ENCODE measurements at regions of chr15 and their contacts with region 1.

Region 1: DNA sequence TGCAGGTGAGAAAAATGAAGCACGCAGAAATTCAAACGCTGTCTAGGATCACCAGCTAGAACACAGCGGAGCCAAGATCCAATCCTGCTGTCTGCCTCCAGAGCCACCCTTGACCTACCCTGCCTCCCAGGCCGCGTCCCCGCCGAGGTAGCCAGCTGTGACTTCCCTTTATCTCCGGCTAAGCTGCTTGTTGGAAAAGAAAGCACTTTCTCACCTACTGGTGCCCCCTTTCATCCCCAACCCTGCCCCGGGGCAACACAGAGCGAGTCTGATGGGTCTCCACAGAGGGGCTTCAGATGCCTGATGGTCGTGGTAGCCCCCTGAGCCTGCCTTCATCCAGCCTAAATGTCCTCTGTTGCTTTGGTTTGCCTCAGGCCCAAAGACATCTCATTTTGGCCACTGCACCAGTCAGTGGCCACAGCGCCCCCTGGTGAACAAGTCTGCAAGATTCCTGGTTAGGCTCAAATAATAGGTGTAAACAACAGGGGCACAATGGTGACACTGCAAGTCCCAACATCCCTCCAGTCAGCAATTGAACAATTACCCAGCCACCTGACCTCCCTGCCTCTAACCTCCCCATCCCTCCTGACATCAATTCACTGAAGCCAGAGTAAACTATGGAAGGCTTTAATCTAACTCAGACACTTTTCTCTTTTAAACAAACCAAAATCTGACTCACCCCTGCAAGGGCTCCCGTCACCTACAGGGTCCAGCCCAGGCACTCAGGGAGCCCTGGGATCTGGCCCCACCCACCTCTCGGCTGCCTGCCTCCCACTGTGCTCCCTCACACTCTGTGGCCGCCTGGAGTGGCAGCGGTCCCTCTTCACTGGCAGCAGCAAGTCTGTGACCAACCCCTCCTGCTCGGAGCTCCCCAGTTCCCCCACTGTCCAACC is 27.3 kb upstream of the BCL2L10 start:
- DNase-seq: peak; percentile 81
- H3K4me3 ChIP-seq: no peak overlapping the region
- H3K27ac ChIP-seq: no peak overlapping the region
- H3K4me1 ChIP-seq: peaks cover 6% of the 10 kb centered on the region
- H3K27me3 ChIP-seq: no peaks in the 10 kb centered on the region
- CTCF ChIP-seq: peak; percentile 80 to 85
- POLR2A ChIP-seq: no peak

Region 2: DNA sequence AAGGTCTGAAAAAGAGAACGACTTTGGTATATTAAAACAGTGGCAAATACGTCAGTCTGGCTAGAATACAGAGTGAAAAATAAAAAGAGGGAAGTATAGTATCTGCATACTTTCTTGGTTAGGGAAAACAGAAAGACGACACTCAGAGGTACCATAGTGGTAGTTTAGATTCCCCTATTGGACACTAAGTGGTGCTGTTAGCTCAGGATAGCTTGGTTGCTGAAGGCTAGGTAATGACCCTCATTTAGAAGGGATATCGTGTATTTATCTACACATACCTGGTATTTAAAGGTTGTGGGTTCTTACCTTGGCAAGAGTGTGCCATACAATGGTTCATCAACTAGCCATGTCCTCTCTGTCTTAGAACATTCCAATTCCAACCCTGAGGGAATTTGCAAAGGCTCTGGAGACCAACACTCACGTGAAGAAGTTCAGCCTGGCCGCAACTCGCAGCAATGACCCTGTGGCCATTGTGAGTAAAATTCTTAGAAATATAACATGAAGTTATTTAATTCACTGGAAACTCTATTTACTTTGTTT is 357.4 kb before region 1 on chr15:
- CTCF ChIA-PET with region 1: no interaction called
- POLR2A ChIA-PET with region 1: no interaction called
- dilution Hi-C with region 1: no loop called
- intact Hi-C with region 1: loop called (anchors 10 kb)
- DNase-seq: peak; percentile 25
- H3K4me3 ChIP-seq: no peak overlapping the region
- H3K27ac ChIP-seq: no peak overlapping the region
- H3K4me1 ChIP-seq: no peaks in the 10 kb centered on the region
- H3K27me3 ChIP-seq: peaks cover 0 to 3% of the 10 kb centered on the region in 2 experiments
- CTCF ChIP-seq: peak; percentile 39 to 45
- POLR2A ChIP-seq: no peak

Region 3: DNA sequence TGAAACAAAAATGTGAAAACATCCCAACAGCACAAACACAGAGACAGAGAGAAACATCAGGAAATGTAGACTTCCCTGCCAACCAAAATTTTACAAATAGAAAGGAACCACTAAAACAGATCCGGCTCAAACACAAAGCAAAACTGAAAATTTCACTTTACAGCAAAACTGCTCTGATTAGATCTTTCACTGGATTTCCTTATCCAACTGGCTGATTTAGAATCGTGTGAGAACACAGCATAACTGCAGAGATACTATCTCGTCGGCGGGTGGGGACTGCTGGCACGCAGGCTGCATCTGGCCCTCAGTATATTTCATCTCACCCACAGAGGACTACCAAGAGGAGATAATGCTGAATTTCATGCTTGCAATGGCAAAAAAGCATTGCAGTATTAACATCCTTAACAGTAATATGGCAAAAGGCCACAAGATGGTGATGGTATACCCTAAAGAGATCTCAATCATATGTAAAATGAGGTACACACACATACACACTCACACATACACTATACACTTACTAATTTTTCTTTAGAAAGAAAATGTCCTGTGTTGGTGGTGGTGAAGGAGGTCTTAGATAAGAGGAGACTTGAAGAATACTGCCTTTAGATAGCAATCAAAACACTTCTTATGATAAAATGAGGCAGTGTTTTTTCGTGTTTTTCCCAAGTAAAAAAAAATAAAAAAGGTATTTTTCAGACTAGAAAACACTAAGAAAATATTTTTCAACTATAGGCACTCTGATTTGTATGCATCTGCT is 157.7 kb before region 1 on chr15:
- CTCF ChIA-PET with region 1: interaction called, 9 read pairs
- POLR2A ChIA-PET with region 1: no interaction called
- dilution Hi-C with region 1: no loop called
- intact Hi-C with region 1: loop called (anchors 1 kb)
- DNase-seq: peak; percentile 94
- H3K4me3 ChIP-seq: peak overlapping the region; percentile 5 to 77 (median 10)
- H3K27ac ChIP-seq: peak overlapping the region; percentile 96
- H3K4me1 ChIP-seq: peaks cover 20% of the 10 kb centered on the region
- H3K27me3 ChIP-seq: no peaks in the 10 kb centered on the region
- CTCF ChIP-seq: peak in 1 of 2 donors; percentile 56
- POLR2A ChIP-seq: peak; percentile 38

Region 4: GRCh38 chr15:52068004-52068615 is 71.7 kb before region 1 on chr15:
- CTCF ChIA-PET with region 1: interaction called, 14 read pairs
- POLR2A ChIA-PET with region 1: no interaction called
- dilution Hi-C with region 1: no loop called
- intact Hi-C with region 1: no loop called
- DNase-seq: no peak
- H3K4me3 ChIP-seq: no peak overlapping the region
- H3K27ac ChIP-seq: no peak overlapping the region
- H3K4me1 ChIP-seq: no peaks in the 10 kb centered on the region
- H3K27me3 ChIP-seq: no peaks in the 10 kb centered on the region
- CTCF ChIP-seq: no peak
- POLR2A ChIP-seq: no peak

Region 5: GRCh38 chr15:52103217-52104207 is 36.3 kb before region 1 on chr15:
- CTCF ChIA-PET with region 1: interaction called, 10 read pairs
- POLR2A ChIA-PET with region 1: no interaction called
- dilution Hi-C with region 1: no loop called
- intact Hi-C with region 1: loop called (anchors 1 kb)
- DNase-seq: peak; percentile 98
- H3K4me3 ChIP-seq: no peak overlapping the region
- H3K27ac ChIP-seq: peak overlapping the region; percentile 77
- H3K4me1 ChIP-seq: peaks cover 19% of the 10 kb centered on the region
- H3K27me3 ChIP-seq: no peaks in the 10 kb centered on the region
- CTCF ChIP-seq: no peak
- POLR2A ChIP-seq: no peak

Region 6: DNA sequence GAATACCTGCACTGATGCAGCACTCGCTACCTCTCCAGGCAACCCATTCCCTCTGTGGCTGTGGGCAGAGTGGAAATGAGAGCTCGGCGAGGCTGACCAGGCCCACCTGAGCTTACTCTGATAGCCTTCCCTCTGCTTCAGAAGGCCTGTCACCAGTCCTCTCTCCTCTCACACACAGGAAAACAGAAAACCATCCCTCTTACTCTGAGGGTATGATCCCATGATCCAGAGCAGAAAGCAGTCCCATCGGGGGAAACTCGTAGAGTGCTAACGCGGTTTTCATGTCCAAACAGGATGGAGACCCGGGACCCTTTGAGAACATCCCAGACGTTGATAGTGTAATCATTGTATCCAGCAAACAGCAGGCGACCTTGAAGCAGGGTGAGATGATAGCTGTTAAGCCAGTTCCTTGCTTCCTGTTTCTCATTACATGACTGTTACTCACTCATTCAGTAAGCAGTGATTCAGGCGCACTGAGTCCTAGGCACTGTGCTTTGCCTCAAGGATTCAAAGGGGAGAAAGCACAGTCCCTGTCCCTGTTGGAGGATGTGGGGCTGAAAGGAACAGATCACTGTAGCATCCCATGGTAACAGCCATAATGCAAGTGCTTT is 15.5 kb before region 1 on chr15:
- CTCF ChIA-PET with region 1: interaction called, 13 read pairs
- POLR2A ChIA-PET with region 1: no interaction called
- dilution Hi-C with region 1: no loop called
- intact Hi-C with region 1: no loop called
- DNase-seq: peak; percentile 92
- H3K4me3 ChIP-seq: no peak overlapping the region
- H3K27ac ChIP-seq: peak overlapping the region; percentile 72
- H3K4me1 ChIP-seq: peaks cover 12% of the 10 kb centered on the region
- H3K27me3 ChIP-seq: no peaks in the 10 kb centered on the region
- CTCF ChIP-seq: no peak
- POLR2A ChIP-seq: peak; percentile 23

Region 7: DNA sequence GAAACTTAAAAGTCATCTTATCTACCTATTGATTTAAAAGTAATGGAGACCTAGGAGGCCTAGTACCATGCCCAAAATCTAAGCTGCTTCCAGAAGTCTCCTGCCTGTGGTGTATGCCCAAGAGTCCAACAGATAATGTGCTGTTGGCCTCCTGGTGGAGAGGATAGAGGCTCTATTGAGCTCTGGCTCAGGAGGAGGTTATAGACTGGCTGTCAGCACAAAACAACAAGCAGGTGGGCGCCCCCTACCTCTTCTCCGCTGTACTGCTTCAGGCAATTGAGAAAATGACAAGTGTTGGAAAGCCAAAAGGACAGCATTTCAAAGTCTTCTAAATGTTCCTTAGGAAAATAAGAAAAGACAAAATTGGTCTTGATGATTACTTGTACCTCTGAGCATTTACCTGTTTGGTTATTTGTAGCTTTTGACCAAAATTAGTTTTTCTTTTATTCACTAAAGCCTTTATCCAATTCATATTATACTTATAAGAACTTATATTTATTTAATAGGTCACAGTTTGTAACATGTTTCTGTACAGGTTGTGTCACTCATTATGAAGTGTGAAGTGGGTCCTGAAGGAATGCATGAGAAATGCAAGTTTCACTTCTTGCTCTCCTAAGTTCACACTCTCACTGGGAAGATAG is 68.6 kb after region 1 on chr15:
- CTCF ChIA-PET with region 1: interaction called, 3 read pairs
- POLR2A ChIA-PET with region 1: no interaction called
- dilution Hi-C with region 1: no loop called
- intact Hi-C with region 1: loop called (anchors 2 kb)
- DNase-seq: peak; percentile 73
- H3K4me3 ChIP-seq: no peak overlapping the region
- H3K27ac ChIP-seq: no peak overlapping the region
- H3K4me1 ChIP-seq: peaks cover 17% of the 10 kb centered on the region
- H3K27me3 ChIP-seq: no peaks in the 10 kb centered on the region
- CTCF ChIP-seq: peak; percentile 71 to 86
- POLR2A ChIP-seq: no peak